Posterior vena cava (tissue), 2 donors: ENCODE measurements at regions of chr1 and their contacts with region 1.

Region 1: GRCh38 chr1:25128121-25128621 is 104.1 kb downstream of the SYF2 start:
- DNase-seq: no peak

Region 2: DNA sequence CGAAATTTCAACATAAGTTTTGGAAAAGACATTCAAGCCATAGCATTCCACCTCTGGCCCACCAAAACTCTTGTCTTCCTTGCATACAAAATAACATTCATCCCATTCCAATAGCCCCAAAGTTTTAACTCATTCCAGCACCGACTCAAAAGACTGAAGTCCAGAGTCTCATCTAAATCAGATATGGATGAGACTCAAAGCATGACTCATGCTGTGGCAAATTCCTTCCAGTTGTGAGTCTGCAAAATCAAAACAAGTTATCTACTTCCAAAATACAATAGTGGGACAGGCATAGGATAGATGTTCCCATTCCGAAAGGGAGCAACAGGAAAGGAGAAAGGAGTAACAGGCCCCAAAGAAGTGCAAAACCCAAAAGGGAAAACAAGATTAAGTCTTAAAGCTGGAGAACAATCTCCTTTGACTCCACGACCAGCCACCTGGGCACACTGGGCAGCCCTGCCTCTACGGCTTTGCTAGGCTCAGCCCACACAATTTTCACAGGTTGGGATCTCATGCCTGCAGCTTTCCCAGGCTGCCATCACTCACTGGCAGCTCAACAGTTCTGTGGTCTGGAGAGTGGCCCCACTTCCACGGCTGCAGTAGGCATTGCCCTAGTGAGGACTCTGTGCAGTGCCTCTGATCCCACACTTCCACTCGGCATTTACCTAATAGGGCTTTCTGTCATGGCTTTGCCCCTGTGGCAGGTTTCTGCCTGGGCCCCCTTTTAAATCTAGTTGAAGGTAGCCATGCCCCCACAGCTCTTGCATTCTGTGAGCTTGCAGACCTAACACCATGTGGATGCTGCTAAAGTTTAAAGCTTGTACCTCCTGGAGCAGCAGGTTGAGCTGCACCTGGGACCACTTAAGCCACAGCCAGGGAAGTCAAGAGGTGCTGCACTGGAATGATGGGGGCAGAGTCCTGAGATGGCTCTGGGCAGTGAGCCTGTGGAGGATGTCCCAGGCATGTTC is 249.1 kb before region 1 on chr1:
- intact Hi-C with region 1: no loop called
- DNase-seq: peak; percentile 41

Region 3: GRCh38 chr1:25068829-25069228 is 59.3 kb before region 1 on chr1:
- intact Hi-C with region 1: no loop called
- DNase-seq: peak; percentile 24

Region 4: GRCh38 chr1:26021647-26022403 is 893.7 kb after region 1 on chr1 and contains the start of gene EXTL1:
- intact Hi-C with region 1: loop called in 1 of 2 experiments (anchors 10 kb)
- DNase-seq: no peak
- total RNA-seq, gene EXTL1: 1.7 TPM in 1 of 2 donors, not detected in the other